ENCODE measurements at regions of chr14 and their contacts with region 1.

Region 1: DNA sequence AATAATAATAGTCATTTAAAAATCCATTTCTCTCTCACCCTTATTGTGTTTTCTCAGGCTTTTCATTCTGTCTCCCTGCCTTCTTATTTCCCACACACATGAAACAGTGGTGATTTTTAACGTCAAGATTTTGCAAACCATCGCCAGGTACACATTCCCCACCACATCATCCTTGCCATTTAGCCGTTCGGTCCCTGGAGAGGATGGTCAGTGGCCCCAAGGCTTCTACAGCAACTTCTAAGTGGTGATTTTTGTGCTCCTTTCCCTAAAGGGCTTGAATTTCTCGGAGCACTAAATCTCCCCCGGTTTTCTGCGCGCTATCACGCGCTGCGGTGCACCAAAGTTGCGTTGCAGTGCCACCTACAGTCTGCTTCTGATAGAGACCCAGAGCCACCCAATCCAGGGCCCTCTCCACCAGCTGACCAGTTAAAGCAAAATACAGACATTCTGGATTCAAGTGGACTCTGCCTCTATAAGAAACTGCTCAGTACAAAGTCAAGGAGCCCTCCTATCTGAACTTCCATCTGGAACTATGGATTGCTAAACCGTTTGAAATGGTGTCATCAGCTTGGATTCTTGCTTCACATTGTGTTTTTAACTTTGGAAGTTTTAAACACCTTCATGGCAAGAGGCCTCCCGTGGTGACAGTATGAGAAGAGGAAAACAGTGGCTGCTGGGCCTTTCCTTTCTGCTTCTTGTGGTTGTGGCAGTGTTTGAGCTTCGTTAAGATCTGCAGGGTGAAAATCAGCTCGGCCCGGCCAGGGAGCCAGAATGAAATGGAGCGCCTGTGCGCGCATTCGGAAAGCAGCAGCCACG is 234.0 kb downstream of the SPTSSA start:
- DNase-seq: peak; percentile 90
- H3K4me3 Mint-ChIP-seq: peak overlapping the region; percentile 54
- H3K27ac Mint-ChIP-seq: no peak overlapping the region
- H3K4me1 Mint-ChIP-seq: peaks cover 12% of the 10 kb centered on the region
- H3K27me3 Mint-ChIP-seq: peaks cover 30% of the 10 kb centered on the region

Region 2: GRCh38 chr14:33792720-33793368 is 435.2 kb before region 1 on chr14:
- intact Hi-C with region 1: loop called (anchors 5 kb)
- DNase-seq: peak; percentile 91
- H3K4me3 Mint-ChIP-seq: peak overlapping the region; percentile 78
- H3K27ac Mint-ChIP-seq: no peak overlapping the region
- H3K4me1 Mint-ChIP-seq: peaks cover 21% of the 10 kb centered on the region
- H3K27me3 Mint-ChIP-seq: peaks cover 52% of the 10 kb centered on the region

Region 3: DNA sequence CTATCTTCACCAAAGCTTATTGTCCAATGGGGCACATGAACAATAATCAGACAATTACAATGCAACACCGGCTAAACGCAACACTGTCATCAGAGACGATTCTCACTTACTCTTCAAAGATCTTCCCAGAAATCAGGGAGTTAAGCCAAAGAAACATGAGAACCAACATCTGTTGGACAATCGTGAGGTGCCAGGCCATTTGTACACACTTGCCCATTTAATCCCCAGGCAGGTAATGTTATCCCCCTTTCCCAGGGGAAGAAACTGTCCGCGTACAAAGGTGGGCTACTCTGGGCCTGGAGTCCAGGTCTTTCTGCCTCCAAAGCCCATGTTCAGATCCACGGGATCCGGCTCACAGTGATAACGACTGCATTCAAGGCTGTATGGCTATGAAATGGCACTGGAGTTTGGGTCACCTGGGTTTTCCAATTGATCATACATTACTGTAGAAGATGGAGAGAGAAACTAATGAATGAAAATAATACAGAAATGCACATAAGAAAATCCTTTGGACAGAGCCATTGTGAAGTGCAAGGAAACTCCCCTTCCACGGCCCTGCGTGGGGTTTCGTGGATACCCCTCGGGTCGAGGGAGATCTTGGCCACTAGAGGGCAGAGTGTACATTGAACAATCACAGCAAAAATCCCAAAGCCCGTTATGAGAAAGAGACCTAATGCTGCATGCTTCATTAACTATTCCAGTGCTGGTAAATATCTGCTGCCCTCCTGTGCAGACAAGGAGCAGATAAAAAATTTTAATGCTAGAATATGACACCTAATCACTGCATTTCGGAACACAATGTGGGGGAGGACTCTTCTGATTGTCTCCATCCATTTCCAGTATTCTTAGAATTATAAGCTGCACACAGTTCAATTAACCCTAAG is 388.6 kb before region 1 on chr14:
- intact Hi-C with region 1: loop called (anchors 1 kb)
- DNase-seq: peak; percentile 89
- H3K4me3 Mint-ChIP-seq: no peak overlapping the region
- H3K27ac Mint-ChIP-seq: no peak overlapping the region
- H3K4me1 Mint-ChIP-seq: peaks cover 38% of the 10 kb centered on the region
- H3K27me3 Mint-ChIP-seq: no peaks in the 10 kb centered on the region

Region 4: GRCh38 chr14:33950320-33951182 is 277.5 kb before region 1 on chr14 and contains the start of gene EGLN3:
- intact Hi-C with region 1: loop called (anchors 2 kb)
- DNase-seq: peak; percentile 95
- H3K4me3 Mint-ChIP-seq: peak within 1 kb of the TSS; percentile 87
- H3K27ac Mint-ChIP-seq: peak within 1 kb of the TSS; percentile 75
- H3K4me1 Mint-ChIP-seq: peaks cover 36% of the 10 kb centered on the region
- H3K27me3 Mint-ChIP-seq: peaks cover 47% of the 10 kb centered on the region
- total RNA-seq, gene EGLN3: 17.4 and 17.6 TPM in 2 replicates

Region 5: GRCh38 chr14:34098045-34098984 is 129.7 kb before region 1 on chr14:
- intact Hi-C with region 1: loop called (anchors 5 kb)
- DNase-seq: peak; percentile 82
- H3K4me3 Mint-ChIP-seq: no peak overlapping the region
- H3K27ac Mint-ChIP-seq: peak overlapping the region; percentile 12
- H3K4me1 Mint-ChIP-seq: peaks cover 42% of the 10 kb centered on the region
- H3K27me3 Mint-ChIP-seq: peaks cover 2% of the 10 kb centered on the region

Region 6: DNA sequence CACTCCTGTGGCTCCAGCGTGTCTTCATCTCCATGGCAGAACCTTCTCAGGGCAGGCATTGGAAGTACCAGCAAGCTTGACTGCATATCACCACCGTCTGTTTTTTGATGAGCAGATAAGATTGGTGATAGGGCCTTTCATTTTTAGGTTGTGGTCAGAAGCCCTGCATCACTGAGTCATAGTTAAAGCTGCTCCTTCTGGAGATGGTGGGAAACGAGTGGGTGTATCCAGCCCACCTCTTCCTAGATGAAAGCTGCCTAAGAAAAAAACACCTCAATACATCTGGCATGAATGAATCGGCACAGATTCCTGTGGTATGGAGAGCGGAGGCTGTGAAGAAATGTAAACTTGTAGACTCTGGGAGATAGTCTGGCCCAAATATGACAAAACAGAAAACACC is 28.5 kb before region 1 on chr14:
- intact Hi-C with region 1: loop called (anchors 2 kb)
- DNase-seq: peak; percentile 65
- H3K4me3 Mint-ChIP-seq: no peak overlapping the region
- H3K27ac Mint-ChIP-seq: peak overlapping the region; percentile 31
- H3K4me1 Mint-ChIP-seq: peaks cover 32% of the 10 kb centered on the region
- H3K27me3 Mint-ChIP-seq: peaks cover 8% of the 10 kb centered on the region